Psoas muscle (tissue), 8 donors: ENCODE measurements at regions of chr16 and their contacts with region 1.

Region 1: DNA sequence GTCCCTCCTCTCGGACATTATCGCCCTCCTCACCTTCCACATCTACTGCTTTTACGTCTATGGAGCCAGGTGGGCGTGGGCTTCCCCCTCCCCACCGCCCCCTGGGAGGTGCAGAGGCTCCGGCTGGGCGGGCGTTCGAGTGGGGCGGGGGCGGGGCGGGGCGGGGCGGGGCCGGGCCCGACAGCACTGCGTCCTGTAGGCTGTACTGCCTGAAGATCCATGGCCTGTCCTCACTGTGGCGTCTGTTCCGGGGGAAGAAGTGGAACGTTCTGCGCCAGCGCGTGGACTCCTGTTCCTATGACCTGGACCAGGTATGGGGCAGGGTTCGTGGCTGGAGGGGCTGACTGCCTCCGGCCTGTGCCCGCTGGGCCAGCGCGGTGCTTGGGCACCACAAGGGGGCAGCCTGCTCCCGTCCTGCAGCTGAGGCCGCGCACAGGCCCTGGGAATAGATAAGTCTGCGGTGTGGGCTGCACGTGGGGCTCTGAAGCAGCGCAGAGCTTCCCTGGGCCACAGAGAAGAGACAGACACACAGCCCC is 9.2 kb downstream of the PIGQ start:
- DNase-seq: peak; percentile 74 to 91
- ATAC-seq: peak; percentile 89 to 94 (median 91)
- H3K4me3 ChIP-seq: peak overlapping the region; percentile 42
- H3K27ac ChIP-seq: no peak overlapping the region
- H3K4me1 ChIP-seq: peaks cover 3% of the 10 kb centered on the region
- H3K27me3 ChIP-seq: no peaks in the 10 kb centered on the region
- CTCF ChIP-seq: peak; percentile 92

Region 2: DNA sequence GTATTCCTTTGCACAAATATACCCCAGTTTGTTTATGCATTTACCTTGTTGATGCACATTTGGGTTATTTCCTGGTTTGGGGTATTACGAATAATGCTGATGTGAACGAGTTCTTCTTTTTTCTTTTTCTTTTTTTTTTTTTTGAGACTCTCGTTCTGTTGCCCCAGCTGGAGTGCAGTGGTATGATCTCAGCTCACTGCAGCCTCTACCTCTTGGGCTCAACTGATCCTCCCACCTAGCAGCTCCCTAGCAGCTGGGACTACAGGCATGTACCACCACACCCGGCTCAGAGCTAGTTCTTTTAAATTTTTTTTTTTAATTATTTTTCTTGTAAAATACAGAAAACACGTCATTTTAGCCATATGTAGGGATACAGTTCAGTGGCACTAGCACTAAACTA is 25.0 kb after region 1 on chr16:
- intact Hi-C with region 1: loop called in 1 of 2 experiments (anchors 2 kb)
- DNase-seq: no peak
- ATAC-seq: no peak
- H3K4me3 ChIP-seq: no peak overlapping the region
- H3K27ac ChIP-seq: no peak overlapping the region
- H3K4me1 ChIP-seq: peaks cover 16% of the 10 kb centered on the region
- H3K27me3 ChIP-seq: no peaks in the 10 kb centered on the region
- CTCF ChIP-seq: no peak

Region 3: DNA sequence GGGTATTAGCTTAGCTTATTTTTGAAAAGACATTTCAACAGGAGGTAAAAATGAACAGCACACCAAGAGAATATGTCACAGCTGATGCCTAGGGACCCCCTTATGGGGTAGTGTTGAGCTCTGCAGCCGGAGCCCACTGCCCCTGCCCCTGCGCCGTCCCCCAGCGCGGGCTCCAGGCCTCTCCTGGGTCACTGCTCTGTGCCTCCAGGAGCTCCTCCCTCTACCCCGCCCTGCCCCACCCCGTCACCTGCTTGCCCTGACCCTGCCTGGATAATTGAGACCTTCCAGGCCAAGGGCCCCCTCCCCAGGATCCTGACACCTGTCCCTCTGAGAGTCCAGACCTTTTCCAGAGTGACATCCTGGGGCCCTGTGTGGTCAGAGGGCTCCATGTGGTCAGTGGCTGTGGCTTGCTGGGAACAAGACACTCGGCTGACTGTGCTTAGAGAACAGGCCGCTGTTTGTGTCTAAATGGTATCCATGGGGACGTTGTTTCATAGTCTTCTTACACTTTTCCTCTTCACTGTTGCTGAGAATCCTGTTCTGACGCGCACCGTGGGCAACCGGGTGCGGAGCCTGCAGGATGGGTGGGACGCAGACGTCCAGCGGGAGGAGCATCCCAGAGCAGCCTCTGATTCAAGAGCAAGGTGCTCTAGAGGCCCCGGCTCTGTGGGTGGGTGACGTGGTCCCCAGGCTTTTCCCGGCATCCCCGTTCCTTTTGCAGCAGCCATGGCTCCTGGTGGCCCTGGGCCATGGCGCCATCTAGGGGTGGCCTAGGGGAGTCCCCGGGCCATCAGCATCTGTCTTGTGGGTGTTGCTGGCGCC is 31.8 kb after region 1 on chr16:
- intact Hi-C with region 1: loop called (anchors 2 to 5 kb)
- DNase-seq: peak; percentile 75 to 84
- ATAC-seq: peak; percentile 90 to 99 (median 94)
- H3K4me3 ChIP-seq: no peak overlapping the region
- H3K27ac ChIP-seq: peak overlapping the region; percentile 55
- H3K4me1 ChIP-seq: peaks cover 18% of the 10 kb centered on the region
- H3K27me3 ChIP-seq: no peaks in the 10 kb centered on the region
- CTCF ChIP-seq: peak; percentile 73

Region 4: GRCh38 chr16:616733-617586 is 38.0 kb after region 1 on chr16:
- intact Hi-C with region 1: loop called in 1 of 2 experiments (anchors 5 kb)
- DNase-seq: no peak
- ATAC-seq: peak in 3 of 4 donors; percentile 15 to 41 (median 30)
- H3K4me3 ChIP-seq: no peak overlapping the region
- H3K27ac ChIP-seq: no peak overlapping the region
- H3K4me1 ChIP-seq: no peaks in the 10 kb centered on the region
- H3K27me3 ChIP-seq: no peaks in the 10 kb centered on the region
- CTCF ChIP-seq: no peak